Activated T-helper 1 cell treated with anti-CD3 and anti-CD28 coated beads, Interleukin-12 subunit alpha, Interleukin-12 subunit beta, Interleukin-2, Interleukin-4 antibody, amounts not matched to agents 30 ng/mL and 10 ng/mL and 1 ng/mL, durations not matched to agents 14 hours and 24 hours and 36 hours (primary cell): ENCODE measurements at regions of chr19 and their contacts with region 1.

Region 1: DNA sequence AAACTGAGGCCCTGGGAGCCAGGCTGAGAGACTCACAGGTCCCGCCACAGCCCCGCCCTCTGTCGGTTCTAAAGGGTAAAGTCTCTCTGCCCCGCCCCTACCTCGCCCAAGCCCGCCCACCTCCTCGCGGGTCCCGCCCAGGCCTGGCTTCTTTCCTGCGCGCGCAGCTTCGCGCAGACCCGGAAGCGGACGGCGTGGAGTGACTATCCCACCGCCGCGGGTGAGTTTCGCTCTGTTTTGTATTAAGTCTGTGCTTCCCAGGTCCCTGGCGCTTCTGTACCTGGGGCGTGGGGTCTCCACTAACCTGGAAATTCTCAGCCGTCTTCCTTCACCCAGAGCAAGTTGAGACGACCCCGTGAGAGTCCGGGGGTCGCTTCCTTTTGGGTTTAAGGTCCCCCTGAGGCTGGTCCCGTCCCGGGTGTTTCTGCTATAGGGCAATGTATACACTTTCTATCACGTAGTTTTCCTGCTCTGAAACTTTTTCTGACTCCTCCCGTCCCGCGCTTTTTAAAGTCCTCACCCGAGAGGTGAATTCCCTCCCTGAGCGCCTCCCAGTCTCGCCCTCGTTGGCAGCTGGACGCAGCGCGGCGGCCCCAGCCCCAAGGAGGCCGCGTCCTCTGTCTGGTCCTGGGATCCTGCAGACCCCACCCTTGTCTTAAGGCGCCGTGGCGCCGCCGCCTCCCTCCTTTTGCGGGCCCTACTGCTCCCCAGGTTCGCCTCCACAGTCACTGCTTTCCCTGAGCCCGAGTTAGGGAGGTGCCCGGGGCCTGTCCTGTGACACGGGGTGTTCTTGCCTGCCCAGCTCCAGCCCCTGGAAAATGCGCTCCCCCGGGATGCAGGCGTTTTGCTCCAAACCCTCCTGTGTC is at the start of gene ZNF765:
- DNase-seq: peak; percentile 93
- H3K4me3 Mint-ChIP-seq: peak within 1 kb of the TSS; percentile 98
- H3K27ac Mint-ChIP-seq: peak within 1 kb of the TSS; percentile 85
- H3K4me1 Mint-ChIP-seq: peaks cover 27% of the 10 kb centered on the region
- H3K27me3 Mint-ChIP-seq: no peaks in the 10 kb centered on the region
- total RNA-seq, gene ZNF765: 9.2 and 10.8 TPM in 2 replicates

Region 2: GRCh38 chr19:53365134-53365898 is 29.9 kb before region 1 on chr19 and contains the start of gene ZNF525:
- intact Hi-C with region 1: loop called (anchors 1 kb)
- DNase-seq: peak; percentile 93
- H3K4me3 Mint-ChIP-seq: peak within 1 kb of the TSS; percentile 93
- H3K27ac Mint-ChIP-seq: peak within 1 kb of the TSS; percentile 91
- H3K4me1 Mint-ChIP-seq: peaks cover 17% of the 10 kb centered on the region
- H3K27me3 Mint-ChIP-seq: no peaks in the 10 kb centered on the region
- total RNA-seq, gene ZNF525: 16.5 and 19.0 TPM in 2 replicates